ENCODE measurements at regions of chr3 and their contacts with region 1.

Region 1: GRCh38 chr3:141460097-141460704 is 26.6 kb upstream of the RASA2 start:
- DNase-seq: peak; percentile 93
- H3K4me3 Mint-ChIP-seq: no peak overlapping the region
- H3K27ac Mint-ChIP-seq: no peak overlapping the region
- H3K4me1 Mint-ChIP-seq: peaks cover 4% of the 10 kb centered on the region
- H3K27me3 Mint-ChIP-seq: peaks cover 12% of the 10 kb centered on the region

Region 2: GRCh38 chr3:141184430-141184829 is 275.8 kb before region 1 on chr3:
- CTCF ChIA-PET with region 1: no interaction called
- DNase-seq: no peak
- H3K4me3 Mint-ChIP-seq: no peak overlapping the region
- H3K27ac Mint-ChIP-seq: no peak overlapping the region
- H3K4me1 Mint-ChIP-seq: no peaks in the 10 kb centered on the region
- H3K27me3 Mint-ChIP-seq: peaks cover 20% of the 10 kb centered on the region

Region 3: DNA sequence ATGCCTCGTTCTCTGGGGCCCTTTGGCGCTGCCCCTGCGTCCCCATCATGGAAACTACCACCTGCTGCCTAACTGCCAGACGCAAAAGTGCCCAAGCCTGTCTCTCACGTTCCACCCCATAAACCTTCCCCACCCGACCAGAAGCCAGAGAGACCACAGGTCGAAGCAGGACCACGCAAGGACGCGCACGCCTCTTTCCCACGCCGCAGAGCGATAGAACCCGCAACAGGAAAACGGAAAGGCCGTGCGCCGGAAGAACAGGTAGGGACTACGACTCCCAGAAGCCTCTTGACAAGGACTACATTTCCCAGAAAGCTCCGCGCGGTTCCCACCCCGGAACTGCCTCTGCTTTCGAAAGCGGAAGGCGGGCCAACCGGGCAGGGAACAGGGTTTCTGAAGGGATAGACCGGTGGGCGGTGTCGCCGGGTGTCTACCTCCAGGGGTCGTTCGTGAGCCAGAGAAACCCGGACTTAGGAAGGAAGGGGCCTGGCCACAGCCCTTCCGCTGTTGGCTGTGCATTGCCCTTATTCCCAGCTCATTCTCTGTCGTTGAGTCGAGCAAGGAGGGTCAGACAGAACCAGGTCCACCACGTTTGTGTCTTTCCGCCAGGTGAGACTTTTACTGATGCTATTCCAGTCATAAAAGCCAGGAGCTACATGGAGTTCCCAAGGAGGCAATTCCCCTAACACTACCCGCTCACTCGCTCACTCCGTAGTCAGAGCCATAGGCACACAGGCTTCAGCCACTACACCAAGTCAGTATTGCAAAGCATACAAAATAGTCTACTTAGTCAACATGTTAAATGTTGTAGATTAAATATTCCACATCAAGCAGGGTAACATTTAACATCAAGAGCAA is 148.5 kb before region 1 on chr3:
- CTCF ChIA-PET with region 1: interaction called, 347 read pairs
- DNase-seq: peak; percentile 99
- H3K4me3 Mint-ChIP-seq: peak overlapping the region; percentile 96
- H3K27ac Mint-ChIP-seq: peak overlapping the region; percentile 97
- H3K4me1 Mint-ChIP-seq: peaks cover 64% of the 10 kb centered on the region
- H3K27me3 Mint-ChIP-seq: no peaks in the 10 kb centered on the region

Region 4: DNA sequence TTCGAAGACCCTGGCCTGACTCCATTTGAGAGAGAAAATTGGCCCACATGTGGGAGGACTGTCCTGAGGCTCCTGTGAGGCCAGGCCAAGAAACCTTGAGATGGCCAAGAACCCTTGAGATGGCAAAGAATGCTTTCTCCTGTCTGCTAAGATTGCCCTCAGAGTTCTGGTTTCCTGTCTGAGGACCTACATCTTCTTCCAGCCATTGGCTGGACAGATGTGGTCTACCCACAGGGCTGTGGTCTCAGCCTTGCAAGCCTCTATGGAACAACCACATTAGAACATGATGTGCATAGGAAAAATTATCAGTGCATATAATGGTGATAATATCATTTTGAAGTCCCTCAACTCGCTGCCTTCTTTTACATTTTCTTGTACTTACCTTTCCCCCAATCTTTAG is 15.8 kb after region 1 on chr3:
- CTCF ChIA-PET with region 1: interaction called, 11 read pairs
- DNase-seq: peak; percentile 51
- H3K4me3 Mint-ChIP-seq: no peak overlapping the region
- H3K27ac Mint-ChIP-seq: no peak overlapping the region
- H3K4me1 Mint-ChIP-seq: peaks cover 33% of the 10 kb centered on the region
- H3K27me3 Mint-ChIP-seq: peaks cover 40% of the 10 kb centered on the region

Region 5: DNA sequence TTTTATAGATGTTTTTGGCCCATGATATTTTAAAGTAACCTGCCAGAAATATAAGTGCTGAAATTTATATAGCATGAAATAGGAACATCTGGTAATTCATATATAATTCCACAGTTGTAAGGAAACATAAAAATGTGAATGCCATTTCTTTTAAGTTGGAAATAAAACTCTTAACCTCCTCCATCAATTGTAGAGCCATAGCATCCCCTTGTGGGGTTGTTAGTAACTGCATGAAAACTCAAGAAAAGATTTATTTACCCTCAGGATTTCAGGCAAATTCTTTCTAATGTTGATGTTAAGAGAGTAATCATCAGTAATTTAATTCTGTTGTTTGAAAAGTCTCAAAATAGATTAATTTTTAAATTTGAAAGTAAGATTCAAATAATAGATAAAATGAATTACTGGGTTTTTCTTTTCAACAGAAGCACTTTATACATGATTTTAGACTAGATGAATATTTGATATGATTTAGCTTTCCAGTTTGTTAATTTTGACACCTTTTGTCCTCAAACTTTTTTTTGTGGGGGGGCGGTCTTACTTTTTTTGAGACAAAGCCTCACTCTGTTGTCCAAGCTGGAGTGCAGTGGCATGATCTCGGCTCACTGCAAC is 101.3 kb after region 1 on chr3:
- CTCF ChIA-PET with region 1: interaction called, 110 read pairs
- DNase-seq: peak; percentile 53
- H3K4me3 Mint-ChIP-seq: no peak overlapping the region
- H3K27ac Mint-ChIP-seq: peak overlapping the region; percentile 63
- H3K4me1 Mint-ChIP-seq: peaks cover 21% of the 10 kb centered on the region
- H3K27me3 Mint-ChIP-seq: no peaks in the 10 kb centered on the region

Region 6: DNA sequence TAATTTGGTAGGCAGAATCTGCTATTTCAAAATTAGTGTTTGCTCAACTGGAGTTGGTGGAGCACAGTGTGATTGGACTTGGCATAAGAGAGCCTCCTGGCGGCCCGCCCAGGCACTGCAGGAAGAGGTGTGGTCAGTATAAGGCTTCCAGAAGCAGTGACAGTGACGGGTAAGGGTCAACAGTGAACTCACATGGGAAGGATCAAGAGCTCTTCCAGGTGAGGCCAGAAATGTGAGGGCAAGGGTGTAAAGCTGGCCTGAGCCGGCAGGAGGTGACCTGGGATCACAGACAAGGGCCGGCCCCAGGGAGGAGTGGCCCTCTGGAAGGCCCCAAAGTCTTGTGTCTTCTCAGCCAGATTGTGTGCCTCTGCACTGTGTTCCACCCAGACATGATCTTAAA is 184.7 kb after region 1 on chr3:
- CTCF ChIA-PET with region 1: interaction called, 28 read pairs
- DNase-seq: peak; percentile 80
- H3K4me3 Mint-ChIP-seq: no peak overlapping the region
- H3K27ac Mint-ChIP-seq: no peak overlapping the region
- H3K4me1 Mint-ChIP-seq: no peaks in the 10 kb centered on the region
- H3K27me3 Mint-ChIP-seq: no peaks in the 10 kb centered on the region

Region 7: DNA sequence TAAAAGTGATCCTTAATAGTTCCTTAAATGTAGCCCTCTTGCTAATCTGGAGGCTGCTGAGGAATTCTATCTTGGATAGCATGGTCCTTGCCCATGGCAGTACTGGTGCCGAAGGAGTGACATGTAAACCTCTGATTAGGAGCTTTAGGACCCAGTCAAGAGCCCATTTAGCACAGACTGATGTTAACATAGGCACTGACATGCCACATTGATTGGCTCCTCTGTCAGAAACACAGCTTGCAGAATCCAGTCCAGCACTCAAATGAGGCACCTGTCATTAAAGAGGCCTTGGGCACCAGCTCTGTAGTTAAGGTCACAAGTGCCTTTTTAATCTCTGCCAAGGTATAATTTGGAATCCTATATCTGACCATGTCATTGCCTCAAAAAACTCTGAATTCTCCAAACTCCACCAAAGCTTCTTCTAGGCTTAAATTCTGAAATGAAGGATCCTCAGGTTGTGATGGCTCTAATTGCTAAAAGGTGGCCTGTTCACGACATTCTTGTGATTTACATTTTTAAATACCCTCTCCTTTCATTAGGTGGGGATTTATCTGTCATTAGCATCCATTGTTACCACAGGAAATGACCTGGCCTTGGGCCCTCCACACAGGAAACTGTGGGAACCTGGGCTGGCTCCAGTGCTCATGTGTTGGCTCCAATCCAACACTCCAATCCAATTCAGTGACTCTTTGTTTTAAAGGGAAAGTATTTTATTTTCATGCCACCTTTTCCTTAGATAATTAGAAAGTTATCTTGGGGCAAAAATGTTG is 220.6 kb after region 1 on chr3:
- CTCF ChIA-PET with region 1: no interaction called
- DNase-seq: no peak
- H3K4me3 Mint-ChIP-seq: no peak overlapping the region
- H3K27ac Mint-ChIP-seq: no peak overlapping the region
- H3K4me1 Mint-ChIP-seq: peaks cover 8% of the 10 kb centered on the region
- H3K27me3 Mint-ChIP-seq: peaks cover 10% of the 10 kb centered on the region

Measured in activated naive CD4-positive, alpha-beta T cell treated with anti-CD3 and anti-CD28 coated beads, Interleukin-2, amount 10 ng/mL, durations not matched to agents 7 days and 5 days (primary cell).